AG04449 (cell line): ENCODE measurements at regions of chr2 and their contacts with region 1.

Region 1: GRCh38 chr2:192286093-192286701 is 91.5 kb upstream of the TMEFF2 start:
- DNase-seq: peak; percentile 5
- H3K4me3 ChIP-seq: no peak overlapping the region
- CTCF ChIP-seq: peak; percentile 51

Region 2: GRCh38 chr2:191818725-191819350 is 467.4 kb before region 1 on chr2:
- CTCF ChIA-PET with region 1: interaction called, 40 read pairs
- POLR2A ChIA-PET with region 1: no interaction called
- DNase-seq: no peak
- H3K4me3 ChIP-seq: no peak overlapping the region
- CTCF ChIP-seq: no peak

Region 3: DNA sequence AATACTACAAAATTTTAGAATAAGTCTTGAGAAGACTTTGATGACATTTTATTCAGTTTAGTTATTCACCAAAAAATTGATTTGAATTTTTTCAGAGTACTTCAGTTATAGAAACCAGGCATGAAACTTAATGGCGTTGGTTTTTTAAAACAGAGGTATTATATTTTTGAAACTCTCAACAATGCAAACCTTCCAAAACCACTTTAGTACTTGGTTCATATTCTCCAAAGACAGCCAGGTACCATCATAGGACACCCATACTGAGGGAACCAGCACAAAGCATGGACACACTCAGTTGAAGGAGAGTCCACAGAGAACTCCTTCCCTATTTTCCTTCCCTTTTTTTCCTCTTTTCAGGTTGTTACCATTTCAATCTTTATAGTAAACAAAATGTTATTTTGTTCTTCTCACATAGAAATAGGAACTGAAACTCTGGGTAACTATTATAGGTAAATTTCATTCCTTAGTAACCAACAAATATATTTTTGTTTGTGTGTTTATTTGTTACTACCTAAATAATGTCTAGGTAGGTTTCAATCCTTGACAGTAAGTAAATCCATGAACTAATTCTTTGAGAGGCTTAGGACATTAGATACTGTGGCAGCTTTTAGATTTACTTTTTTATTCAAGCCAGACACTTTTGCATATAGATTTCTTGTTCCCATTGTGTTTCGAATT is 187.2 kb before region 1 on chr2:
- CTCF ChIA-PET with region 1: no interaction called
- POLR2A ChIA-PET with region 1: no interaction called
- DNase-seq: no peak
- H3K4me3 ChIP-seq: no peak overlapping the region
- CTCF ChIP-seq: no peak

Region 4: DNA sequence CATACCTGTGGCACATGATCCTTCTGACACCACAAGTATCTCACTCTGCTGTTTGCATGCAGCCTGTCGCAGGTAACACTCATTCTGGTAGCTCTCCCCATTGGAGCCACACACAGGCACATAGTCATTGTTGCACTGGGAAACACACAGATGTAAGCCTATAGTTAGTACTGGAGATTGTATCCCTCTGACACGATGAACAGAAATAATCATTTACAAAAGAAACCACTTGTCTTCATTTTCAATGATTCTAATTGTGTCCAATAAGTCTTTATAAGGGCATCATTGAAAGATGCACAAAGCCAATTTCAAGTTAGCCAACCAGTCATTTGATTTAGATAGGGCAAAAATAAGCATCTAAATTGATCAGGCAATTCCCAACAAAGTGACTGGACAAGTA is 101.8 kb before region 1 on chr2:
- CTCF ChIA-PET with region 1: interaction called, 27 read pairs
- POLR2A ChIA-PET with region 1: no interaction called
- DNase-seq: no peak
- H3K4me3 ChIP-seq: no peak overlapping the region
- CTCF ChIP-seq: no peak

Region 5: DNA sequence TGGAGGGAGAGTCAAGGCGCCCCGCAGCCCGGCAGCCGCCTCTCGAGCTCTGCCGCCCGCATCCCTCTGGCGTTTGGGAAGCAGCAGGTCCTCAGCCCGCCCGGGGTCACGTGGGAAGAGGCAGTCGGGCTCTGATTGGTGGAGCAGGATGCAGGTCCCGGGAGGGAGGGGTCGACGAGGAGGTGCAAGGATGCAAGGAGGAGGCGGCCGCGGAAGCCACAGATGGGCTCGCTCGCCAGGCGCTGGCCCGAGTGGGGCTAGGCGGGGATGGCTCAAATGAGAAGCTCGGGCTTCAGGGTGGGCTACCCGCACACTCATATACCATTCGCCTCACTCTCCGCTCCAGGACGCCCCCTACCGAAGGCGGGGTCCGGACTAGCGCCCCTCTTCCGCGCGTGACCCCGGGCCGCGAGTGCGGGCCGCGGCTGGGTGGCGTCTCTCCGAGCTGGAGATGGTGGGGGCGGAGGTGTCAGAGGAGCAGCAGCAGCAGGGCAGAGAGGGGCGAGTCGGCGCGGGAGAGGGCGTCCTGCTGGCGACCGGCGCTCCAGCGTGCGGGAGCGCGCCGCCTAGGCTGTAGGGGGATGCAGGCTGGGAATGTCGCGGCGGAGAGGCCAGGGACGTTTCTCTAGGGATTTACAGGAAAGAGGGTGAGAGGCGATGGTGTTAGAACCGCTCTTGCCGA is 91.2 kb before region 1 on chr2 and contains the start of gene TMEFF2:
- CTCF ChIA-PET with region 1: interaction called, 67 read pairs
- POLR2A ChIA-PET with region 1: no interaction called
- DNase-seq: no peak
- H3K4me3 ChIP-seq: peak within 1 kb of the TSS; percentile 64
- CTCF ChIP-seq: peak; percentile 36

Region 6: GRCh38 chr2:192275632-192276031 is 10.6 kb before region 1 on chr2:
- CTCF ChIA-PET with region 1: interaction called, 13 read pairs
- POLR2A ChIA-PET with region 1: no interaction called
- DNase-seq: no peak
- H3K4me3 ChIP-seq: no peak overlapping the region
- CTCF ChIP-seq: no peak